ENCODE measurements at regions of chr15 and their contacts with region 1.

Region 1: DNA sequence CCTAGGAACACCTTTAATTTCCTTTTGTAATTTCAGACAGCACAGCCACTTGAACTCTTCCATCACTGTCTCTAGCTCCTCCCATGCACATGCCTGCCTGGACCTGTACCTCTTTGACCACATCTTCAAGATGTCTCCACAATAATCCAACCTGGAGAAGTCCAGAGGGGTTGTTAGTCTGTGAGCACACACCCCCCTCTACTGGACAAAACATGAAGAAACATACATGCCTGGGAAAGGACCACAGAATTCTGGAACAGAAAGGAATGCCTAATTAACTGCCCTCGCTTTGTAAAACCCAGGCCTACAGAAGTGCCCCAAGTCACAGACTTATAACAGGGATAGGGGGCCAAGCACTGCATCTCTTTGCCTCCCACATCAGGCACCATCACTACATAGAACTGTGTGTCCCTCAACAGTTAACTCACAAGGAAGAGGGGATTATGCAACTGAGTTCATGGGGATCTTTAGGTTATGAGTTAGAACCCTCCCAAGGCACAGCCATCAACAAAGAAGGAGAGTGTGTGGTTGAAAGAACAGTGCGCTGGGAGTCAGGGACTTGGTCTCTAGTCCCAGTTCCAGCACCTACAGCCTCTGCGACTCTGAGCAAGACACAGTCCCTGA is 61.7 kb downstream of the FMN1 start:
- DNase-seq: no peak
- ATAC-seq: peak; percentile 73

Region 2: DNA sequence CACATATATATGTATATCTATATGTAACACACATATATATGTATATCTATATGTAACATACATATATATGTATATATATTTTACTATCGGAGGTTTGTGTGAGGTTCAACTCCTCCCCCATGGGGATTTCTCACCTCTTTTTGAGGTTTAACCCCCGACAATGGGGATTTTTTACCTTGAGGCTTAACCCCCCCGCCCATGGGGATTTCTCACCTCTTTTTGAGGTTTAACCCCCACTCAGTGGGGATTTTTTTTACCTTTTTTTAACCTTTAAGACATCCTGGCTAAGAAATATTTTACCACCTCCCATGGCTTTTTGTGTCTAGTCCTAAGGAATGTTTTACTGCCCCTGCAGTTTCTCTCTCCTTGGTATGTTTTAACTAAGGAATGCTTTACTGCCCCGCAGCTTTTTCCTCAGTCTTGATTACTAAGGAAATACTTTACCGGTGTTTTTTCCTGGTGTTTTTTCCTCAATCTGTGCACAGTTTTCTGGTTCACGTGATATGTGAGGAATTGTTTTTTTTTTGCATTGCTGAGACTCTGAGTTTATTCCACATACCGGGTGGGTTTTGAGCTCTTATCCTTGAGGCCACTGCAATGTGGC is 1621.0 kb before region 1 on chr15:
- intact Hi-C with region 1: no loop called
- DNase-seq: no peak
- ATAC-seq: no peak

Region 3: DNA sequence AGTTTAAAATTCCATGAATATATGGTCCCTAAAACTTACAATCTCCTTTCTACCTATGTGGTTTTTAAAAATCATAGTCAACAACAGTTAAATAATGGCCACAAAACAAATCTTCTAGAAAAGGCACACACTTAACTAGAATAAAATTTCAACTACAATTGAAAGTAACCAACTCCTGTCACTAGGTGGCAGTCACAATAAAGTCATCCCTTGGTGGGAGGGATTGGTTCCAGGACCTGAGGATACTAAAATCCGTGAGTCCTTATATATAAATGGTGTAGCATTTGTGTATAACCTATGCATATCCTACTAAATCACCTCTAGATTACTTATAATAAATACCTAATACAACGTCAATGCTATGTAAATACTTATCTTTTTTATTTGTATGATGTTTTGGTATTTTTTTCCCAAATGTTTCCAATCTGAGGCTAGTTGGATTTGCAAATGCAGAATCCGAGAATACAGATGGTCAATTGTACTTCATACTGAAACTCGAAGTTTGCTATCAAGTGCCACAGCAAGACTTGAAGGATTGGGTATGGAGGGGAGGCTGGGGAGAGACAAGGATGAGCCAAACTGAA is 110.9 kb before region 1 on chr15:
- intact Hi-C with region 1: loop called (anchors 5 kb)
- DNase-seq: no peak
- ATAC-seq: peak; percentile 76

Region 4: GRCh38 chr15:33086507-33087121 is 46.2 kb before region 1 on chr15:
- intact Hi-C with region 1: loop called (anchors 2 kb)
- DNase-seq: no peak
- ATAC-seq: peak; percentile 51